Heart left ventricle (tissue), 16 donors: ENCODE measurements at regions of chr15 and their contacts with region 1.

Region 1: DNA sequence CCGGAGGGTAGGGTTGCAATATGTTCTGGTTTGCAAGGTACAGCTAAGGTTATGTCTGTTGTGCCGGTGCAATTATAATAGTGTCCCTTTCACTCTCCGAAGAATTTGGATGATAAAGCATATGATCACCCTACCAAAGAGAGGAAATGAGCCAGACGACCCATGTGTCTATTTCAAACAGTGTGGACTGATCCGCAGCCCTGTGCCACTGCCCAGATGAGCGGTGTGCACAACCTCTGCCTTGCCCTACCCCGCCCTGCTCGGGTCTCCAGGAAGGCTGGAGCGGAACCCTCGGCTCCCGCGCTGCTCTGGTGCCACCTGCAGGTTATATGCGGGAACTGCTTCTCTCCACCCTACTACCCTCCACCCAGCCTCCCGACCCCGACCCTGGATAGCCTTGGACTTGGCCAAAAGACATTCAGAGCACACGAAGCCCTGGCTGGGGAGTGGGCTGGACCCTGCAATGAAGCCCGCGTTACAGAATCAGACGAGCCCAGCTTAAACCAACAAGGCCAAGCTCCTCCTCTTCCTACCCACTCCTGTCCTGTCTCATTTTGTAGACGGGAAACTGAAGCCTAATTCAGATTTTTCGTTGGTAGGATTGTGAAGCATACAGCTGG is 68.4 kb upstream of the CHRNB4 start:
- DNase-seq: peak; percentile 60 to 87 (median 71)
- ATAC-seq: peak; percentile 83 to 96 (median 95)
- H3K4me3 ChIP-seq: peak overlapping the region in 1 of 12 donors; percentile 6
- H3K27ac ChIP-seq: no peak overlapping the region
- H3K4me1 ChIP-seq: peaks cover 0 to 7% (median 0%) of the 10 kb centered on the region in 12 donors
- H3K27me3 ChIP-seq: peaks cover 0 to 10% (median 0%) of the 10 kb centered on the region in 9 donors
- CTCF ChIP-seq: peak; percentile 73 to 94 (median 90)
- POLR2A ChIP-seq: no peak

Region 2: GRCh38 chr15:78077058-78077877 is 632.1 kb before region 1 on chr15 and contains the start of gene TBC1D2B:
- intact Hi-C with region 1: no loop called
- DNase-seq: peak; percentile 63 to 89 (median 75)
- ATAC-seq: peak; percentile 20 to 78 (median 64)
- H3K4me3 ChIP-seq: peak within 1 kb of the TSS; percentile 73 to 100 (median 90)
- H3K27ac ChIP-seq: peak within 1 kb of the TSS; percentile 73 to 97 (median 90)
- H3K4me1 ChIP-seq: peaks cover 0 to 52% (median 30%) of the 10 kb centered on the region in 12 donors
- H3K27me3 ChIP-seq: no peaks in the 10 kb centered on the region
- CTCF ChIP-seq: peak in 3 of 12 donors; percentile 1 to 23 (median 7)
- POLR2A ChIP-seq: no peak
- total RNA-seq, gene TBC1D2B: 6.5 to 45.2 (median 10.8) TPM

Region 3: DNA sequence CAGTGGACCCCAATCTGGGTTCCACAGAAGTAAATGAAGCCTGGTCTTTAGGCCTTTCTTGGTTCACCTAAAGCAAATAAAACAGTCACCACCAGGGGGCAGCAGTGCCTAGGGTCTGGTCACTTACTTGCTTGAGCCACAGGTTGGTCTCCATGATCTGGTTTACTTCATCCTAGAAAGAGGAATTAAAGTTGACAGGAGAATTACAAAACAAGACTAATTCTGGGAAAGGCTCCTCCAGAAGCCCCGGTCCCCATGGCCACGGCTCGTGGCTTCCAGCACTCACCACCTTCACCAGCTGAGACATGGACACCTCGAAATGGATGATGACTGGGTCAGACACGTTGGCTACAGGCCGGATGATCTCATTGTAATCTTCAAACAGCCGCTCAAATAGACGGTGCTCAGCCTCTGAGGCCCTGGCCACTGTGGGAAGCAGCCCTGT is 90.9 kb before region 1 on chr15:
- intact Hi-C with region 1: loop called (anchors 1 to 2 kb)
- DNase-seq: peak; percentile 82 to 87 (median 84)
- ATAC-seq: peak; percentile 75 to 83 (median 80)
- H3K4me3 ChIP-seq: no peak overlapping the region
- H3K27ac ChIP-seq: peak overlapping the region in 1 of 12 donors; percentile 23
- H3K4me1 ChIP-seq: peaks cover 0 to 31% (median 13%) of the 10 kb centered on the region in 12 donors
- H3K27me3 ChIP-seq: peaks cover 19 to 48% (median 28%) of the 10 kb centered on the region in 9 donors
- CTCF ChIP-seq: peak; percentile 74 to 93 (median 88)
- POLR2A ChIP-seq: no peak

Region 4: GRCh38 chr15:78638658-78639314 is 70.6 kb before region 1 on chr15:
- intact Hi-C with region 1: loop called (anchors 1 to 5 kb)
- DNase-seq: peak in 3 of 5 donors; percentile 42 to 48 (median 47)
- ATAC-seq: peak in 3 of 4 donors; percentile 56 to 73 (median 70)
- H3K4me3 ChIP-seq: no peak overlapping the region
- H3K27ac ChIP-seq: no peak overlapping the region
- H3K4me1 ChIP-seq: peaks cover 0 to 16% (median 6%) of the 10 kb centered on the region in 12 donors
- H3K27me3 ChIP-seq: peaks cover 0 to 15% (median 6%) of the 10 kb centered on the region in 9 donors
- CTCF ChIP-seq: peak; percentile 48 to 76 (median 61)
- POLR2A ChIP-seq: no peak

Region 5: GRCh38 chr15:79380755-79381497 is 671.6 kb after region 1 on chr15:
- intact Hi-C with region 1: no loop called
- DNase-seq: peak; percentile 53 to 82 (median 70)
- ATAC-seq: peak; percentile 61 to 88 (median 80)
- H3K4me3 ChIP-seq: no peak overlapping the region
- H3K27ac ChIP-seq: no peak overlapping the region
- H3K4me1 ChIP-seq: no peaks in the 10 kb centered on the region
- H3K27me3 ChIP-seq: no peaks in the 10 kb centered on the region
- CTCF ChIP-seq: peak; percentile 75 to 93 (median 87)
- POLR2A ChIP-seq: no peak